HAP-1 (cell line): ENCODE measurements at regions of chr15 and their contacts with region 1.

Region 1: GRCh38 chr15:90954712-90955671 is at the start of gene RCCD1:
- DNase-seq: peak; percentile 94 to 97
- H3K4me3 ChIP-seq: peak within 1 kb of the TSS; percentile 56
- H3K4me1 ChIP-seq: peaks cover 10% of the 10 kb centered on the region
- H3K27me3 ChIP-seq: no peaks in the 10 kb centered on the region

Region 2: DNA sequence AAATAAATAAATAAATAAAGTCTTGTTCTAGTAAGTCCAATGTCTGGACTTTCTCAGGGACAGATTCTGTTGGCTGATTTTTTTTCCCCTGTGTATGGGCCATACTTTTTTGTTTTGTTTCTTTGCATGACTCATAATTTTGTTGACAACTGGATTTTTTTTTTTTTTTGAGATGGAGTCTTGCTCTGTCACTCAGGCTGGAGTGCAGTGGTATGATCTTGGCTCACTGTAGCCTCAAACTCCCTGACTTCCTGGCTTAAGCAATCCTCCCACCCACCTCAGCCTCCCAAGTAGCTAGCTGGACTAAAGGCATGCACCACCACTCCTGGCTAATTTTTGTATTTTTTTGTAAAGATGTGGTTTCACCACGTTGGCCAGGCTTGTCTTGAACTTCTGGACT is 1340.8 kb before region 1 on chr15:
- in situ Hi-C with region 1: loop called (anchors 25 kb)
- DNase-seq: no peak
- H3K4me3 ChIP-seq: no peak overlapping the region
- H3K4me1 ChIP-seq: peaks cover 4% of the 10 kb centered on the region; the same call in 1 of the 2 replicates
- H3K27me3 ChIP-seq: no peaks in the 10 kb centered on the region

Region 3: DNA sequence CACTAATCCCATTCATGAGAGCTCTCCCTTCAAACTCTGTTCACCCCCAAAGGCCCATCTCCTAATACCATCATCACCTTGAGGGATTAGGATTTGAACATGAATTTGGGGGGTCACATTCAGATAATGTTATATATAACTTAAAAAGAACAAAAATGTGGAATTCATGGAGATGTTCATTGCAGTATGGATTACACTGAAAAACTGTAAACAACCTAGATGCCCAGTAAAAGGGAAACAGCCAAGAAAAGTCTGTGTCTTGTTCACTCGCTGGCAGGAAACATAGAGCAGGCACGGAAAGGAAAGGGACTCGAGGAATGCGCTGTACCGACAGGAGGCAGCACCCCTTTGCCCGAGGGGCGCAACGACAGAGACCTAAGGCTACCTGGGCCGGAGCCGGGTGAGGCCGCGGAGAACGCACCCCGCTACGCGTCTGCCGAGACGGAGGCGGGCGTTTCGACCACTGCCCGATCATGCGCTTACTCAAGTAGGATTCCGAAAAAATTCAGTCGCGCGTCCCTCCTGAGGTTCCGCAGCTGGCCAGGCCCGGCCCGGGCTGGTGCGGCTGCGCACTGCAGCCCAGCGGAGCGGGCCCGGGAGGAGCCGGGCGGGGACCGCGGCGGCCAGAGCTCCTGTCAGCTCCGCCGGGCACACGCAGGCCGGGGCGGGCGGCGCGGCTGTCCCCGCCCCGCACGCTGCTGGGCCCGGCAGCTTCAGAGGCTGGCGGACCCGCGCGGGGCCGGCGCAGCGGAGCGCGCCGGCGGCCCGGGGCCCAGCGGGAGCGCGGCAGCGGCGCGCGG is 52.8 kb before region 1 on chr15:
- in situ Hi-C with region 1: no loop called
- DNase-seq: peak; percentile 67 to 72
- H3K4me3 ChIP-seq: peak overlapping the region; percentile 49
- H3K4me1 ChIP-seq: peaks cover 16% of the 10 kb centered on the region
- H3K27me3 ChIP-seq: no peaks in the 10 kb centered on the region

Region 4: GRCh38 chr15:90994417-90995311 is 39.7 kb after region 1 on chr15 and contains the start of gene PRC1:
- in situ Hi-C with region 1: loop called (anchors 5 kb)
- DNase-seq: peak; percentile 97 to 99
- H3K4me3 ChIP-seq: peak within 1 kb of the TSS; percentile 100
- H3K4me1 ChIP-seq: peaks cover 12% of the 10 kb centered on the region
- H3K27me3 ChIP-seq: no peaks in the 10 kb centered on the region